Activated CD4-positive, alpha-beta T cell treated with anti-CD3 and anti-CD28 coated beads, Interleukin-2, amount 10 ng/mL, durations not matched to agents 24 days and 14 days (primary cell): ENCODE measurements at regions of chr2 and their contacts with region 1.

Region 1: DNA sequence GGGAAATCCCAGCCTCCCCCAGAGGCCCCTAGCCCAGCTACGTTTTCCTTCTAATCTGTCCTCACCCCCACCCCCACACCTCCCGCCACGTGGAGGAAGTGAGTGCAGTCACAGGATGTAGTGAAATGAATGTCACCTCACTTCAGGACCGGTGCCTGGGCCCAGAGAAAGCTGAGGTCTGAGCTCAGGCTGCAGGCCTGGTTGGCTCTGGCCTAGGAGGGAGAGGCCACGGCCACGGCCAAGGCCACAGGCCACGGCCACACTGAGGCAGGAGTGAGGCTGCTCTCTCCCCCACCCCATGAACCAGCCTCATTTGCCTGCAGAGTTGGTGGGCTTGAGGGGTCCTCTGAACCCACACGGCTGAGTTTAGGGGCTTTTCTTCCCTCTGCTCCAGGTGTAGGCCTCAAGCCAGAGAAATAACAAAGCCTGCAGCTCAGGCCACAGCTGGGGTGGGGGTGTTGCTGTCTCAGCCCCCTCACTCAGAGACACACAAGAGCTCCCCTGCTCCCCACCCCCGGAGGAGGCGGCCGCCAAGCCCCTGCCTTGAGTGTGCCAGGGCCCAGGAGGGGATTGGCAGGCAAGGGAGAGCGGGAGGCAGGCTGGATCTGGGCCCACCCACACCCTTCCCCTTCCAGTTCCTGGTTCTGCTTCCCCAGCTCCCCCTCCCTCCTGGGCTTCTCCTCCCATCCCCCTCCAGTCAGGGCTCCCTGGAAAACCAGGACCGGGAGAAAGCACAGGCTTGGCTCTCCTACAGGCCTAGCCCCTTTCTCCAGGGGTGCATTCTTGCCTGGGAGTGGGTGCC is 27.0 kb downstream of the DNMT3A start:
- DNase-seq: peak; percentile 94
- H3K4me3 Mint-ChIP-seq: peak overlapping the region; percentile 91
- H3K27ac Mint-ChIP-seq: peak overlapping the region; percentile 97
- H3K4me1 Mint-ChIP-seq: peaks cover 44% of the 10 kb centered on the region
- H3K27me3 Mint-ChIP-seq: no peaks in the 10 kb centered on the region

Region 2: DNA sequence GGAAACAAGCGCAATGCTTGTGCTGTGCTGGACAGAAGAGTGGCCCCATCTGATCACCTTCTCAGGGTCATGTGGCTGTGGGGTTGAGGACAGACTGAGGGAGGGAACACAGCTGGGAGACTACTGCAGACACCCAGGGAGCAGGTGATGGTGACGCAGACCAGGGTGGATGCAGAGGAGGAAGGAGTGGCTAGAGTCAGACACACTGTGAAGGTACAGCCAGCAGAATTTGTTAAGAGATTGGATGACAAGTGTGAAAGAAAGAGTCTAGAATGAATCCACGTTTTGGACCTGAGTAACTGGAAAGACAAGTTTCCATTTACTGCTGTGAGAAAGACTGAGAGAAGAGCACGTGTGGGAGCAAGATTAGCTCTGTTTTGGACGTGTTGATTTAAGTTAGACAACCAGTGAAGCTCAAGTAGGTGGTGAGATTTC is 130.4 kb before region 1 on chr2:
- intact Hi-C with region 1: no loop called
- DNase-seq: no peak
- H3K4me3 Mint-ChIP-seq: no peak overlapping the region
- H3K27ac Mint-ChIP-seq: no peak overlapping the region
- H3K4me1 Mint-ChIP-seq: no peaks in the 10 kb centered on the region
- H3K27me3 Mint-ChIP-seq: peaks cover 14% of the 10 kb centered on the region

Region 3: GRCh38 chr2:25301453-25302352 is 13.0 kb before region 1 on chr2:
- intact Hi-C with region 1: loop called (anchors 1 kb)
- DNase-seq: peak; percentile 89
- H3K4me3 Mint-ChIP-seq: peak overlapping the region; percentile 58
- H3K27ac Mint-ChIP-seq: peak overlapping the region; percentile 78
- H3K4me1 Mint-ChIP-seq: peaks cover 40% of the 10 kb centered on the region
- H3K27me3 Mint-ChIP-seq: no peaks in the 10 kb centered on the region